HCT116 (cell line): ENCODE measurements at regions of chr17 and their contacts with region 1.

Region 1: GRCh38 chr17:74961657-74962490 is 10.7 kb downstream of the HID1 start:
- DNase-seq: peak; percentile 80
- ATAC-seq: peak; percentile 80
- H3K4me3 ChIP-seq: no peak overlapping the region
- H3K27ac ChIP-seq: no peak overlapping the region
- H3K4me1 ChIP-seq: peaks cover 11 to 20% of the 10 kb centered on the region in 2 experiments; a peak in 3 of 4 replicates
- H3K27me3 ChIP-seq: no peaks in the 10 kb centered on the region
- CTCF ChIP-seq: peak; percentile 75 to 95 (median 87)
- POLR2A ChIP-seq: no peak
- RAD21 ChIP-seq: peak; percentile 99

Region 2: DNA sequence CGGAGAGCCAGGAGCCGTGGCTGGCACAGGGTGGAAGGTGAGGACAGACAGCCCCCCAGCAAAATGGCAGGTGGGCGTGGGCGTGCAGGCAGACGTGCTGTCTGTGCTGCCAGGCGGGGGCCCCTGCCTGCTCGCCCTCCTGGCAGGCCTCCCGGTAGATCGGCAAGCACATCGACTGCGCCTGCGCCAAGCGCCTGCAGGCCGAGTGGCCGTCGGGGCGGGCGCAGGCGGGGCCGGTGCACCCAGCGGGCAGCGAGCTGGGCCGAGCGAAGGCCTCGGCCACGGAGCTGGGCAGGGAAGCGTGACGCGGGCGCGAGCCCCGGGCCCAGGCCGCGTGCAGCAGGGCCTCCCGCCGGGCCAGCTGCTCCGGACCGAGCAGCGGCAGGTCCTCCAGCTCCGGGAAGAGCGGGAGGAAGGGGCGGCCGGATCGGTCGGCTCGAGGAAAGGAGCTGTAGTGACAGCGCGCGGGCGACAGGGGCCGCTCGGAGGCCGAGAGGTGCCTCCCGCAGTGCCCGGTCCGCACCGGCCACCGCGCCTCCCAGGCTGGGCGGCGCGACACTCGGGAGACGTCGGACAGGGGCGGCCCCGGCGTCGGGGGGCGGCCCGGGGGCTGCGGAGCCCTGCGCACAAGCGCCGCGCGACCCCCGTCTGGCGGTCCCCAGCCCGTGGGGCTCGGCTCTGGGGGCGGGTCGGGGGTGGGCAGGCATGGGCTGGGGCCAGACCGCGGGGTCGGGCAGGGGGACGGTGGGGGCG is 119.1 kb before region 1 on chr17:
- CTCF ChIA-PET with region 1: interaction called, 22 read pairs
- POLR2A ChIA-PET with region 1: no interaction called
- RAD21 ChIA-PET with region 1: interaction called in 1 of 2 experiments, 6 read pairs
- intact Hi-C with region 1: no loop called
- DNase-seq: peak; percentile 56
- ATAC-seq: peak; percentile 90
- H3K4me3 ChIP-seq: peak overlapping the region; percentile 40 to 59
- H3K27ac ChIP-seq: peak overlapping the region; percentile 80; the same call in 1 of the 2 replicates
- H3K4me1 ChIP-seq: peaks cover 7 to 25% of the 10 kb centered on the region in 2 experiments
- H3K27me3 ChIP-seq: no peaks in the 10 kb centered on the region
- CTCF ChIP-seq: peak in 2 of 3 experiments; percentile 58 to 65; a peak in 5 of 6 replicates
- POLR2A ChIP-seq: peak; percentile 36
- RAD21 ChIP-seq: no peak; the same call in none of the 2 replicates

Region 3: DNA sequence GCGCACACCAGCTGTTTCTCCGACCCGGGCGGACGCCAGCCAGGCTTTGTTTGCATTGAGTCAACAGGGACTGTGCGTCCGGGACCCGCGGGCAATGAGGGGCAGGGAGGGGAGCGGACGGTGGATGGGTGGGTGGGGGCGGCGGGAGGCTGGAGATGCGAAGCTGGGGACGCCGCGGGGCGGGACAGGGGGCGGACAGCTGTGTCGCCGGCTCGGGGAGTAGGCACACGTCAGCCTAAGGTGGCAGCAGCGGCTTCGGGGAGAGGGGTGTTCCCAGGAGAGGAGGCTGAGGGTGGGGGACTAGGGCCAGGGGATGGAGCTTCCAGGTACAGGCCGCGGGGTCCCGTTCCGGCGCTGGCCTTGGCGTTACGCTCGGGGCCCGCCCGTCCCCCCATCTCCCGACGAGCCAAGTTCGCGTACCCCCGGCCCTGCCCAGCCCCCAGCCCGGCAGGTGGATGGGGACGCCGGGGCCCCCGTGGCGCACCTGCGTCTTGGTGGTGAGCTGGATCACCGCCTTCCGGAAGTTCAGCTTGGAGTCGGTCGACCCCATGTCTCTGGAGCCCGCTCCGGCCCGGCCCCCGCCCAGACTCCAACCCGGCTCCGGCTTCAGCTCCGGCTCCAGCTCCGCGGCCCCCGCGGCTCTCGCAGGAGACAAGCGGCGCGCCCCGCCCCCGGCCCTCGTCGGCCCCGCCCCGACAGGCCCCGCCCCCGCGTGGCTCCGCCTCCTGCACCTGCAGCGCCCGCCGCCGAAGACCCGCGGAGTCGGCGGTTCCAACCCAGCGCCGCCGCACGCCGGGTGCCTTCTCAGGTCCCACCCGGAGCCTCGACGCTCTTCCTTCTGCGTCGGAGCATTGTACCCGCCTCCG is 10.5 kb after region 1 on chr17 and contains the start of gene HID1:
- CTCF ChIA-PET with region 1: interaction called, 36 read pairs
- POLR2A ChIA-PET with region 1: interaction called, 4 read pairs
- RAD21 ChIA-PET with region 1: interaction called in 1 of 2 experiments, 3 read pairs
- intact Hi-C with region 1: no loop called
- DNase-seq: no peak
- ATAC-seq: peak; percentile 89
- H3K4me3 ChIP-seq: peak within 1 kb of the TSS; percentile 80 to 84
- H3K27ac ChIP-seq: peak within 1 kb of the TSS; percentile 48; the same call in 1 of the 2 replicates
- H3K4me1 ChIP-seq: peaks cover 36 to 39% of the 10 kb centered on the region in 2 experiments
- H3K27me3 ChIP-seq: no peaks in the 10 kb centered on the region
- CTCF ChIP-seq: no peak
- POLR2A ChIP-seq: no peak
- RAD21 ChIP-seq: no peak
- total RNA-seq, gene HID1: 43.8 TPM

Region 4: DNA sequence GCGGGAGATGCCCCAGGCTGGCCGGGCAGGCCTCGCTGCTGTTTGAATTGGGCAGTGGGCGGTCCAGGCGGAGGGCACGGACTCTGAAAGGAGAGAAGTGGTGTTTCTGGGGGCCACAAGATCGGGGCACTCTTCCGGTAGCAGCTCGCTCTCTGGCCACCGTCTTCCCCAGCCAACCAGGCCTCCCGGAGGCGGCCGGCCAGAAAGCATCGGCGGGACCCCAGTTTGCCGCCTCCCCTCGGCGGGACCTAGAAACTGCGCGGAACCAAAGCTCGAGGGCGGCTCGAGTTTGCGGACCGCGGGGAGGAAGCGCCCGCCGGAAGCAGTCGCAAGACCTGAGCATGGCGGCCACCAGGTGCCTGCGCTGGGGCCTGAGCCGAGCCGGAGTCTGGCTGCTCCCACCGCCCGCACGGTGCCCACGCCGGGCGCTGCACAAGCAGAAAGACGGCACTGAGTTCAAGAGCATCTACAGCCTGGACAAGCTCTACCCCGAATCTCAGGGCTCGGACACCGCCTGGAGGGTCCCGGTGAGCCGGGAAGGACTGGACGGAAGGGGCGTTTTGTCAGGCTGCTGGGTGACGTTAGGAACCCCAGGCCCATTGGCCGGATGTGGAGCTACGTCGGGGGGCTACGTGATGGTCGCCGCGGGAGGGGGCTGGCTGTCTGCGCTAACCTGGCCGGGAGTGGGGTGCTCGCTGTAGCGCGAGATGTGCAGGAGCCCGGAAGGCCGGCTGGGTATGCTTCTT is 50.6 kb after region 1 on chr17 and contains the start of gene MRPL58:
- CTCF ChIA-PET with region 1: interaction called, 35 read pairs
- POLR2A ChIA-PET with region 1: interaction called, 3 read pairs
- RAD21 ChIA-PET with region 1: interaction called, 4 to 7 read pairs
- intact Hi-C with region 1: loop called (anchors 1 kb)
- DNase-seq: peak; percentile 84
- ATAC-seq: peak; percentile 93
- H3K4me3 ChIP-seq: peak within 1 kb of the TSS; percentile 83 to 95
- H3K27ac ChIP-seq: peak within 1 kb of the TSS; percentile 76
- H3K4me1 ChIP-seq: peaks cover 11 to 19% of the 10 kb centered on the region in 2 experiments
- H3K27me3 ChIP-seq: no peaks in the 10 kb centered on the region
- CTCF ChIP-seq: peak in 2 of 3 experiments; percentile 39 to 65; a peak in 4 of 6 replicates
- POLR2A ChIP-seq: peak; percentile 90
- RAD21 ChIP-seq: peak; percentile 46
- total RNA-seq, gene MRPL58: 80.5 TPM

Region 5: DNA sequence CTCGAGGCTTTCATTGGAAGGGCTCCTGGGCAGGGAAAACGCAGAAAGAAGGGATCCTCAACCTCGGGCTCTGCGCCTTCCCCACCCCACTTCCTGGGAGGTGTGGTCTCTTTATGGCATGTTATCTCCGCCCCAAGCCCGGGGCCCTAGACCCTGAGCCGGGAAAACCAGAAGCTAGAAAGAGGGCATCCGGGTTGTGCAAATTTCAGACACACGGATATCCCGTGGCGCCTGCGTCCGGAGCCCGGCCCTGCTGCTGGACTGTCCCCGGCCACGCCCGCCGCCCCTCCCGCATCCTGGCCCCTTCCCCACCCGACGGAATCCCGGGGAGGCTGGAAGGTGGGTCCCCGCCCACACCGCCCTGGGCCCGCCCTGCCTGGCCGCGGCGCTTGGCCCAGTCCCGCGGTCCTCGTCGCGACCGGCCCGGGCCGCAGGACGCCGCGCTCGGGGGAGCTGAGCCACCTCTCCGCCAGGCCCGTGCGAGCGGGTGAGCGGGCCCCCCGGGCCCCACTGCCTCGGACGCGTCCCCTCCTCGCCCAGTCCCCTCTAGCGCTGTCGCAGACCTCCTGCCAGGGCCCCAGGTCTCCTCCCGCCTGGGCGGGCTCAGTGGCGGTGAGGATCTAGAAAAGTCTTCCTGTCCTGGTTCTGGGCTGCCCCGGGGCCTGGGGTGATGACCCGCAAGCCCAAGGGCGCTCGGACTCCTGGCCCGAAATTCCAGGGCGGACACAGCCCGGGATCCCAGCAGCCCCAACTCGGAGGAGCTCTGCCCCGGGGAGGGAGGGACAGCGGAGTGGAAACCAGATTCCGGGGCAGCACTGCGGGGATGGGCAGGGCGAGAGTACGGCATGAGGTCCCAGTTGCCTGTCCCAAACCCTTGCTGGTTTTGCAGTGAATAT is 125.9 kb after region 1 on chr17 and contains the start of gene SLC16A5:
- CTCF ChIA-PET with region 1: interaction called, 12 read pairs
- POLR2A ChIA-PET with region 1: no interaction called
- RAD21 ChIA-PET with region 1: no interaction called
- intact Hi-C with region 1: no loop called
- DNase-seq: peak; percentile 84
- ATAC-seq: peak; percentile 78
- H3K4me3 ChIP-seq: peak within 1 kb of the TSS; percentile 76 to 83
- H3K27ac ChIP-seq: peak within 1 kb of the TSS; percentile 99
- H3K4me1 ChIP-seq: peaks cover 72 to 89% of the 10 kb centered on the region in 2 experiments
- H3K27me3 ChIP-seq: no peaks in the 10 kb centered on the region
- CTCF ChIP-seq: no peak
- POLR2A ChIP-seq: peak; percentile 77
- RAD21 ChIP-seq: no peak
- total RNA-seq, gene SLC16A5: 79.3 TPM

Region 6: DNA sequence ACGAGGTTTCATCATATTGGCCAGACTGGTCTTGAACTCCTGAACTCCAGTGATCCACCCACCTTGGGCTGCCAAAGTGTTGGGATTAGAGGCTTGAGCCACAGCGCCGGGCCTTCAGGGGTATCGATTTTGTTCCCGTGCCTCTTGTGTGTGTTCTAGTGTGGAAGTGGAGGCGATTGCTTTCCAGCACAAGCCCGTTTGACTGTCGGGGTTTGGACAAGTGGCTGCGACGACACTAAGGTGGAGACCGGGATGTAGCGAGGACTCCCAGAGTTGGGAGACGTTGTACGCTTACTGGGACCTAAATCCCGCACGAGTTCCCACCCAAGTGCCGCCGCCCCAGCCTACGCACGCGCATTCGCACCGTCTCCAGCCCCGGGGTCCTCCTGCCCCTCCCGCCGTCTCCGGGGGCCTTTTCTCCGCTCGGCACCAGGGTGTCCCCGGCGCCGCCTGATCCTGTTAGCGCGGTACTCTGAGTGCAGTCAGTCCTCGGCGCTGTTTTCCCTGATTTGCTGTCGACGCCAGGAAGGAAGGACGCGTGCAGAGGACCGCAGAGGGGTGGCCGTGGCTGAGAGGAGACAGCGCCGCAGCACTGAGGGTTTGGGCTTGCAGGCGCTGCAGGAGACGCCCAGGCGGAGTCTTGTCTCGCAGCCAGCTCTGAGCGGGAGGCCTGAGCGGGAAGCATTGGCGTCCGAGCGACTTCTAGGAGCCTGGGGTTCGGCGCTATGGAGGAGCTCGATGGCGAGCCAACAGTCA is 243.3 kb after region 1 on chr17 and contains the start of gene NUP85:
- CTCF ChIA-PET with region 1: interaction called, 18 read pairs
- POLR2A ChIA-PET with region 1: interaction called, 6 read pairs
- RAD21 ChIA-PET with region 1: interaction called, 4 to 7 read pairs
- intact Hi-C with region 1: loop called (anchors 1 kb)
- DNase-seq: peak; percentile 96
- ATAC-seq: peak; percentile 87
- H3K4me3 ChIP-seq: peak within 1 kb of the TSS; percentile 75 to 85
- H3K27ac ChIP-seq: peak within 1 kb of the TSS; percentile 85
- H3K4me1 ChIP-seq: peaks cover 11 to 27% of the 10 kb centered on the region in 2 experiments
- H3K27me3 ChIP-seq: no peaks in the 10 kb centered on the region
- CTCF ChIP-seq: no peak
- POLR2A ChIP-seq: peak; percentile 98
- RAD21 ChIP-seq: no peak
- total RNA-seq, gene NUP85: 164 TPM

Region 7: DNA sequence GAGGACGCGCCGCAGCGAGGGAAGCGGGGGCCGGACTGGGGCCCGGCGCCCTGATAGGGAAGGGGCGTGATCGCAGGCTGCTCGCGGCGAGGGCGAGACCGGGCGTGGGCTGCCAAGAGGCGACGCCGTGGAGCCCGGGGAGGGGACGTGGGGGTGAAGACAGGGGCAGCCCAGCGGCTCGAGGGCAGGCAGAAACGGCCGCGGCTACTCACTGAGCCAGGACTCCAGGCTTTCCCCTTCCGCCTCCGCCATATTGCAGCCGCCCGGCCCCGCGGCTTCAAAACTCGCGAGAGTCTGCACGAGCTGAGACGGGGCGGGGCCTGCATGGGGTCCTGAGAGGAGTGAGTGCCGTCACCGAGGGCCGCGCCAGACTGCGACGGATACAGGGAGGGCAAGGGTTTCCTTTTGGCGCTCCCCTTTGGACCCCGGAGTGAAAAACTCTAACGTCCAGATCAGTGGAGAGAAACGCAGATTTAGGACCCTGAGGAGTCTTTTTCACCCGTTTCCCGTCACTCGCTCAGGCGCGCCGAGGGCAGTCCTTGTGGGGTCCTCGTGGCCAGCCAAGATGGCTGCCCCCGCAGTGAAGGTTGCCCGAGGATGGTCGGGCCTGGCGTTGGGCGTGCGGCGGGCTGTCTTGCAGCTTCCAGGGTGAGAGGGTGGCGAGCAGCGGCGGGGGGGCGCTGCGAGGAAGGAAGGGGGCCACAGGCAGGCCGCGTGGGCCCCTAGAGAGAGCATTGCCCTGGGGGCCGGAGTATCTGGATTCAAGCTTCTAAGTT is 299.6 kb after region 1 on chr17 and contains the starts of genes GGA3 and MRPS7:
- CTCF ChIA-PET with region 1: no interaction called
- POLR2A ChIA-PET with region 1: no interaction called
- RAD21 ChIA-PET with region 1: no interaction called
- intact Hi-C with region 1: no loop called
- DNase-seq: peak; percentile 89
- ATAC-seq: peak; percentile 95
- H3K4me3 ChIP-seq: peak within 1 kb of the TSS; percentile 83 to 97
- H3K27ac ChIP-seq: peak within 1 kb of the TSS; percentile 80
- H3K4me1 ChIP-seq: peaks cover 17 to 21% of the 10 kb centered on the region in 2 experiments
- H3K27me3 ChIP-seq: no peaks in the 10 kb centered on the region
- CTCF ChIP-seq: no peak
- POLR2A ChIP-seq: no peak
- RAD21 ChIP-seq: no peak; the same call in 1 of the 2 replicates
- total RNA-seq, gene GGA3: 58.3 TPM
- total RNA-seq, gene MRPS7: 104 TPM

Region 8: GRCh38 chr17:75799398-75799797 is 837.5 kb after region 1 on chr17:
- CTCF ChIA-PET with region 1: no interaction called
- POLR2A ChIA-PET with region 1: no interaction called
- RAD21 ChIA-PET with region 1: no interaction called
- intact Hi-C with region 1: no loop called
- DNase-seq: no peak
- ATAC-seq: no peak
- H3K4me3 ChIP-seq: no peak overlapping the region
- H3K27ac ChIP-seq: no peak overlapping the region
- H3K4me1 ChIP-seq: no peaks in the 10 kb centered on the region
- H3K27me3 ChIP-seq: no peaks in the 10 kb centered on the region
- CTCF ChIP-seq: no peak
- POLR2A ChIP-seq: no peak
- RAD21 ChIP-seq: no peak